ENCODE measurements at regions of chr1 and their contacts with region 1.

Region 1: GRCh38 chr1:98251497-98251896 is 330.7 kb upstream of the DPYD start:
- DNase-seq: no peak
- ATAC-seq: no peak
- H3K4me3 ChIP-seq: no peak overlapping the region
- H3K27ac ChIP-seq: no peak overlapping the region
- H3K4me1 ChIP-seq: no peaks in the 10 kb centered on the region
- H3K27me3 ChIP-seq: no peaks in the 10 kb centered on the region
- CTCF ChIP-seq: no peak

Region 2: GRCh38 chr1:98268316-98268715 is 16.8 kb after region 1 on chr1:
- intact Hi-C with region 1: loop called in 1 of 10 experiments (anchors 2 kb)
- DNase-seq: no peak
- ATAC-seq: no peak
- H3K4me3 ChIP-seq: no peak overlapping the region
- H3K27ac ChIP-seq: no peak overlapping the region
- H3K4me1 ChIP-seq: no peaks in the 10 kb centered on the region
- H3K27me3 ChIP-seq: no peaks in the 10 kb centered on the region
- CTCF ChIP-seq: no peak

Measured in heart right ventricle (tissue), 16 donors.